AG04450 (cell line): ENCODE measurements at regions of chr10 and their contacts with region 1.

Region 1: GRCh38 chr10:116683821-116684220 is 58.5 kb downstream of the HSPA12A start:
- DNase-seq: no peak
- H3K4me3 ChIP-seq: no peak overlapping the region
- H3K27ac ChIP-seq: no peak overlapping the region
- H3K27me3 ChIP-seq: no peaks in the 10 kb centered on the region
- CTCF ChIP-seq: no peak

Region 2: GRCh38 chr10:116657863-116658551 is 25.8 kb before region 1 on chr10:
- CTCF ChIA-PET with region 1: no interaction called
- POLR2A ChIA-PET with region 1: no interaction called
- DNase-seq: no peak
- H3K4me3 ChIP-seq: no peak overlapping the region
- H3K27ac ChIP-seq: no peak overlapping the region
- H3K27me3 ChIP-seq: peaks cover 12% of the 10 kb centered on the region
- CTCF ChIP-seq: no peak

Region 3: DNA sequence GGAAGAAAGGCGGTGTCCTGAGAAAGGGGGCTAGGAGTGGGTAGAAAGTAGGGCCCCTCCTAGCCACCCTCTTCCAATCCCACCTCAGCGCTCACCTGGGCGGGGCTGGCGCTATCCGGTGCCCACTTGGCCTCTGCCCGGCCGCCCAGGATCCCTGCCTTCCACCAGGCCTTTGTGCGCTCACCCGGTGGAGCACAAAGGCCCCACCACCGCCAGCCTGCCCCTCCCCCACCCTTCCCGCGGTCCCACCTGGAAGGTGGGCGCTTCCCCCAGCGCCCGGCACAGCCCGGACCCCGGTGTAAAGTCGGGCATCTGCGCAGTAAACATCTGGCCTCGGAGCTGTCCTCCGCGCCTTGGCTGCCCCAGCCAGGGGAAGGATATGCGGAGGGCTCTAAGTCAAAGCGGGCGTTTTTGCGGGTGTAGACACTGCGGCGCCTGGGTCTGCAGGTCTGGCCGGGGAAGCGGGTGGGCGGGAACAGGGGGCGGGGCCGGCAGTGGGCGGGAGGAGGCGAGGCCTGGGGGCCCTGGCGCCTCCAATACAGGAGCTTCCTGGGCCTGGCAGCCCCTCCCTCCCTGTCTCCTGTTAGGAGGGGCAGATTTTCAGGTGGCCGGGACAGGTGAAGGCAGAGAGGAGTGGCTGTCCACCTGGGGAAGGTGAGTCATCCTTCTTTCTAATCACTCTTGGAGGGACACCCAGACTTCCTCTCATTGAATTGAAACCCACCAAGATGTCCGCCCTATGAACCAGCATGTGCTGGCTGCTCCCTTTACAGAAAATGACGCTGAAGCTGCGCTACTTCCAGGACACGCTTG is 13.8 kb before region 1 on chr10:
- CTCF ChIA-PET with region 1: interaction called, 14 read pairs
- POLR2A ChIA-PET with region 1: no interaction called
- DNase-seq: no peak
- H3K4me3 ChIP-seq: no peak overlapping the region
- H3K27ac ChIP-seq: no peak overlapping the region
- H3K27me3 ChIP-seq: no peaks in the 10 kb centered on the region
- CTCF ChIP-seq: no peak

Region 4: GRCh38 chr10:116699471-116700150 is 15.8 kb after region 1 on chr10:
- CTCF ChIA-PET with region 1: interaction called, 29 read pairs
- POLR2A ChIA-PET with region 1: no interaction called
- DNase-seq: no peak
- H3K4me3 ChIP-seq: no peak overlapping the region
- H3K27ac ChIP-seq: no peak overlapping the region
- H3K27me3 ChIP-seq: no peaks in the 10 kb centered on the region
- CTCF ChIP-seq: no peak

Region 5: DNA sequence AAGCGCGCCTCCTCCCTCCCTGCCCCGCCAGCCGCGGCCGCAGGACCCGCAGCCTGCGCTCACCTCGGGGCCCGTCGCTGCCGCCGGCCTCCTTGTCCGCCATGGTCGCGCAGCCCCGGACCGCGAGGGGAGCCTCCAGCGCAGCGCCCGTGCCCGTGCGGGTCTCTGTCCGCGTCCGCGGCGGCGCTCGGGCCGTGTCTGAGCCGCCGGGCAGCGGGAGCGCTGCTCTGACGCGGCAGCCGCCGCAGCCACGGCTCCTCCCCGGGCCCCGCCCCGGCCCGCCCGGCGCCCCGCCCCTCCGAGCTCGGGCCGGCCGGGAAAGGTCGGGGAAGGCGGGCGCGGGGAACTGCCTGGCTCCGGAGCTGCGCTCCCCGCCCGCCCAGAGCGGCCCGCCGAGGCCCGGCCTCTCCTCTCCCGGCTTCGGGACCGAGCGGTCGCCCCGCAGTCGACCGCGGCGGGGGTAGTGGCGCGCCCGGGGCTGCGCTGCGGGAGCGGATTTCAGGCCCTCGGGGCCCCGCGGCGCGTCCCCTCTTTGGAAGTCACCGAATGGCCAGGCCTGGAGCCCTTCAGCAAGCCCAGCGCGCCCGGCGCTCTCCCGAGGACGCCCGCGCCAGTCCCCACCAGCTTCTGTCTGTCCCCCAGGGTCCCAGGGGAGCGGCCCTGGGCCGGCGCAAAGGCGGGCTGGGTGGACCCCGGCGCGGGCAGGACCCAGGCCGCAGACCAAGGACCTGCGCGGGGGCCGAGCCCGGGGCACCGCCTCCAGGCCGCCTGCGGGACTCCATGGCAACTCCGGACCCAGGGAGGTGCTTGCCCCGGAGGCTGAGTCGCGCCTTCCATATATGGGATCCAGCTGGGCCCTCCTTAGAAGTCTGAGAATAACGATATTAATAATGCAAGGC is 58.8 kb after region 1 on chr10 and contains the start of gene HSPA12A:
- CTCF ChIA-PET with region 1: interaction called, 17 read pairs
- POLR2A ChIA-PET with region 1: interaction called, 6 read pairs
- DNase-seq: peak; percentile 59
- H3K4me3 ChIP-seq: peak within 1 kb of the TSS; percentile 79
- H3K27ac ChIP-seq: peak within 1 kb of the TSS; percentile 65
- H3K27me3 ChIP-seq: no peaks in the 10 kb centered on the region
- CTCF ChIP-seq: no peak
- polyA plus RNA-seq, gene HSPA12A: 20.0 and 20.5 TPM in 2 replicates

Region 6: GRCh38 chr10:116771101-116771958 is 87.5 kb after region 1 on chr10:
- CTCF ChIA-PET with region 1: interaction called, 22 read pairs
- POLR2A ChIA-PET with region 1: no interaction called
- DNase-seq: peak; percentile 76
- H3K4me3 ChIP-seq: no peak overlapping the region
- H3K27ac ChIP-seq: peak overlapping the region; percentile 90
- H3K27me3 ChIP-seq: no peaks in the 10 kb centered on the region
- CTCF ChIP-seq: no peak

Region 7: GRCh38 chr10:116779076-116779687 is 95.4 kb after region 1 on chr10:
- CTCF ChIA-PET with region 1: interaction called, 26 read pairs
- POLR2A ChIA-PET with region 1: no interaction called
- DNase-seq: no peak
- H3K4me3 ChIP-seq: no peak overlapping the region
- H3K27ac ChIP-seq: no peak overlapping the region
- H3K27me3 ChIP-seq: no peaks in the 10 kb centered on the region
- CTCF ChIP-seq: no peak

Region 8: GRCh38 chr10:116796910-116797513 is 113.2 kb after region 1 on chr10:
- CTCF ChIA-PET with region 1: interaction called, 426 read pairs
- POLR2A ChIA-PET with region 1: no interaction called
- DNase-seq: peak; percentile 30
- H3K4me3 ChIP-seq: no peak overlapping the region
- H3K27ac ChIP-seq: no peak overlapping the region
- H3K27me3 ChIP-seq: peaks cover 19% of the 10 kb centered on the region
- CTCF ChIP-seq: peak; percentile 97